ENCODE measurements at regions of chr7 and their contacts with region 1.

Region 1: GRCh38 chr7:88516429-88516828 is 209.7 kb upstream of the STEAP4 start:
- DNase-seq: no peak
- H3K4me3 ChIP-seq: no peak overlapping the region
- H3K27ac ChIP-seq: no peak overlapping the region
- H3K4me1 ChIP-seq: no peaks in the 10 kb centered on the region
- H3K27me3 ChIP-seq: no peaks in the 10 kb centered on the region
- CTCF ChIP-seq: no peak
- POLR2A ChIP-seq: no peak

Region 2: GRCh38 chr7:88576720-88577119 is 60.3 kb after region 1 on chr7:
- intact Hi-C with region 1: loop called in 1 of 2 experiments (anchors 10 kb)
- DNase-seq: no peak
- H3K4me3 ChIP-seq: no peak overlapping the region
- H3K27ac ChIP-seq: no peak overlapping the region
- H3K4me1 ChIP-seq: no peaks in the 10 kb centered on the region
- H3K27me3 ChIP-seq: no peaks in the 10 kb centered on the region
- CTCF ChIP-seq: no peak
- POLR2A ChIP-seq: no peak

Region 3: GRCh38 chr7:89002981-89003956 is 486.8 kb after region 1 on chr7:
- intact Hi-C with region 1: no loop called
- DNase-seq: no peak
- H3K4me3 ChIP-seq: peak overlapping the region in 1 of 4 donors; percentile 60
- H3K27ac ChIP-seq: no peak overlapping the region
- H3K4me1 ChIP-seq: peaks cover 0 to 6% of the 10 kb centered on the region in 2 donors
- H3K27me3 ChIP-seq: no peaks in the 10 kb centered on the region
- CTCF ChIP-seq: no peak
- POLR2A ChIP-seq: no peak